WTC11 (cell line): ENCODE measurements at regions of chr15 and their contacts with region 1.

Region 1: DNA sequence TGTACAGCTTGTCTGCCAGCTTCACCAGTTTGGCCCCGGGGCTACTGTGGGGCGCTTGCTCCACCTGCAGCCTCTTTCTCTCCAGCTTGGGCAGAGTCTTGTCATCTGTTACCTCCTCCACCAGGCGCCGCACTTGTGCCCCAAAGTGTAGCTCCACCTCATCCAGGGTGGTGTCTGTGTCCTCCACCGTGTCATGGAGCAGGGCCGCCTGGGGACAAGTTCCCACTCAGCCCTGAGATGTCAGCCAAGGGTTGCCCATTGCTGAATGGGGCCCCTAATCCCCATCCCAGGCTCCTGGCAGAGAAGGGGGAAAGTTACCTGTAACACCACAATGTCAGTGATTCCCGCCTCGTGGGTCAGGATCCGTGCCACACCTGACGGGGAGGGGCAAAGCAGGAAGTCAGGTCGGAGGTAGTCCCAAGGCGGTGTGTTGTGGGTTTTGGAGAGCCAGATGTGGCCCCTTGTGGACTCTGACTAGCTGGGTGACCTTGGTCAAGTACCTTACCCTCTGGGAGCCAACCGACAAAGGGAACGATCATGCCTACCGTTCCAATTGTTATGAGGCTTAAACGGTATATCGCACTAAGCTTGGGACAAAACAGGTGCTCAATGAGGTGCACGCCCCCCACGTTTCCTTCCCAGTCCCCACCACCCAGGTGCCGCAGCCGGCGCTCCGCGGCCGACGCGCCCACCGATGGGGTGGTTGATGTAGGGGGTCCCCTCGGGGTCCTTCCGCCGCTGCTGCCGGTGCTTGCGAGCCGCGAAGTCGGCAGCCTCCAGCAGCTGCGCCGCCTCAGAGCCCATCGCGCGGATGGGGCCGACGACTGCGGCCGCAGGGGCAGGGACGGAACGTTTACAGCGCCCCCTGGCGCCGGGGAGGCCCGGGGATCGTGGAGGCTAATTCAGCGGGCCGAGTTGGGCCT is at the start of gene HDDC3:
- DNase-seq: peak; percentile 96
- ATAC-seq: peak; percentile 49
- H3K4me3 Mint-ChIP-seq: peak within 1 kb of the TSS; percentile 95
- H3K27ac Mint-ChIP-seq: peak within 1 kb of the TSS; percentile 95
- H3K4me1 Mint-ChIP-seq: peaks cover 23% of the 10 kb centered on the region
- H3K27me3 Mint-ChIP-seq: peaks cover 12% of the 10 kb centered on the region
- CTCF ChIP-seq: peak; percentile 83
- total RNA-seq, gene HDDC3: 16.4 to 23.6 TPM (median 21.7 TPM) in 3 replicates

Region 2: DNA sequence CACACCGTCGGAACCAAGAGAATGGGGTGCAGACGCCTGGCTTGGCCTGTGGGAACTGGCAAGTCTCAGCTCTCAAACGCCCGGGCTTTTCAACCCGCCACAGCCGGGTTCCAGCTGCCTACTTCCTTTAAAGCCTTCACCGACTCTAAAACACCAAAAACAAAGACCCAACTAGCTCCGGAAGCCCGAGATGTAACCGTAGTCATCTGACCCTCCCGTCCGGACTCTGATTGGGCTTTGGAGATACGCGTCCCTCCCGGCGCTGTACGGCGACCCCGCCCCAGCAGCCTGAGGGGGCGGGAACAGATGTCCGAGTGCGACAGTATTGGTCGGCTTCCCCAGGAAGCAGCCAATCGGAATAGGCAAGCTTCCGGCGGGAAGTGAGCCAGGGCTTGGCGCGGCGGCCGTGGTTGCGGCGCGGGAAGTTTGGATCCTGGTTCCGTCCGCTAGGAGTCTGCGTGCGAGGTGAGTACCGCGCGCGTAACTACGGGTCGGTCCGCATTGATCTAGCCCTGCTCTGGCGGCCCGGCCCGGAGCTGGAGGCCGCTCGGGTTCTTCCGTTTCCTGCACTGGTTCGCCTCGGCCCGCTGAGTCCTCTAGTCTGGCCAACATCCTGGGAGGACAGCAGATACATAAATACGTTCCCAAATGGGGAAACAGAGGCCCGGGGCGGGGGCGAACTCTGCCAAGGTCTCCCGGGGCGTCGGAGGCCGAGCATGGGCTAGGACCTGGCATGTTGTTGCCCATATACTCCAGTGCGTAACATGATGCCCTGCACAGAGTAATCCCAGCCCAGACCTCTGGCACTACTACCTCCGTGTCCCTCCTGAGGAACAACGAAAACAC is 214.8 kb before region 1 on chr15 and contains the start of gene BLM:
- CTCF ChIA-PET with region 1: interaction called, 18 read pairs
- POLR2A ChIA-PET with region 1: interaction called, 5 read pairs
- DNase-seq: peak; percentile 95
- ATAC-seq: peak; percentile 99
- H3K4me3 Mint-ChIP-seq: peak within 1 kb of the TSS; percentile 98
- H3K27ac Mint-ChIP-seq: peak within 1 kb of the TSS; percentile 98
- H3K4me1 Mint-ChIP-seq: peaks cover 16% of the 10 kb centered on the region
- H3K27me3 Mint-ChIP-seq: no peaks in the 10 kb centered on the region
- CTCF ChIP-seq: no peak
- total RNA-seq, gene BLM: 29.9 to 40.5 TPM (median 34.8 TPM) in 3 replicates

Region 3: DNA sequence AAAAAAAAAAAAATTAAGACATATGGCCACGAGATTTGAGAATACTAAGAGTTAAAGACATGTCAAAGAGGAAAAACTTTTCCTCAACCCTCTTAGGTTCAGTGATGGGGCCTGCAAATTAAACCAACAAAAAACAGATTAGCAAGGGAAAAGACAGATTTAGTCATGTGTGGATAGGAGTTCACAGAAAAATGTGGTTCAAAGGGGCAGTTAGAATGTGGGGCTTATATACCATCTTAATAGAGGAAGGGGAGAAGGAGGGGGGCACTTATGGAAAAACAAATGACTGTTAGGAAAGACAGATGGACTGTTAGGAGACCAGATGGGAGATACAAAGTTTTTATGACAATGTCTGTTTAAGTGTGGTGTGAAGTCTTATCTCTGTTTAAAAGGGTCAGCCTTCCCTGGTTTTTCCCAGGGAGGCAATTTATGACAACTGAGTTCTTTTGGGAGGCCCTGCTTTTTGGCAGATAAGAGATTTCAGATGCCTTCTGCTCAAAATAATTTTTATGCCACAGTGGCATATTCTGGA is 132.3 kb before region 1 on chr15:
- CTCF ChIA-PET with region 1: no interaction called
- POLR2A ChIA-PET with region 1: no interaction called
- DNase-seq: no peak
- ATAC-seq: no peak
- H3K4me3 Mint-ChIP-seq: no peak overlapping the region
- H3K27ac Mint-ChIP-seq: no peak overlapping the region
- H3K4me1 Mint-ChIP-seq: no peaks in the 10 kb centered on the region
- H3K27me3 Mint-ChIP-seq: no peaks in the 10 kb centered on the region
- CTCF ChIP-seq: no peak

Region 4: DNA sequence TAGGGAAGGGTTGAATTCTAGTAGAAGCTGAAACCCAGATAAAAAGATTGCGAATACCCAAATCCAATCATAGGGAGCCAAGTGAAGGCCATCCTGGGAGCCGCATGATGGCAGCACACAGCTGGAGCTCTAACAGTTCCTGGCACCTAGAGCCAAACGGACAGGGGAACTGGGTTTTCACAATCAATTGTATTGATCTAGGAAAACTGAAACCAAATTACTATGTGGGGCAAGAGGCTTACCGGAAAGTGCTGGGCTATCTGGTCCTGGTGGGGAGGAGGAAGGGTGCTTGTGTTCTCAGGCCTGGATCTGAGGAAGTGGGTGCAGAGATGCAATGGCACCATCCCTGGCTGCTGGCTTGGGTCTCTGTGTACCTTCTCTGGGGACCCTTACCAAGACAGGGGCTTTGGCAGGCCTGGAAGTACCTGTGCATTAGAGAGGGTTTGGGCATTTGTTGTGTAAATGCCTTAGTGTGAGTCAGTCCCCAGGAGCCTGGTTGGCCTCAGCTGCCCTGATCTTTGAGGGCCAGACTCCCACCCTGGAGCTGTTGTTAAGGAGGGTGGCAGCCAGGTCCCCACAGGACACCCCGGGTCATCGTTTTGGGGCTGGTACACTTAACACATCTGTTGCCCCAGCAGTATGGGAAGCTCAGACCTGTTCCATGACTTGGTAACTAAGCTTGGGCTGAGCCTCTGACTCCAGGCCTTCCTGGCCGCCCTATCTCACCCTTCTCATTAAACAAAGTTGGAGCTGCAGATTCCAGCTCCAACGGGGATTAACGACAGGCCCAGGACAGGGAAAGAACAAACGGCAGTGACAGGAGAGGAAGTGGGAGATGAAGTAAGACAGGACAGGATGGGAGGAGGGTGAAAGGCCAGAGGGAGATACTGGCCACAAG is 72.5 kb before region 1 on chr15:
- CTCF ChIA-PET with region 1: interaction called, 11 read pairs
- POLR2A ChIA-PET with region 1: no interaction called
- DNase-seq: no peak
- ATAC-seq: peak; percentile 83
- H3K4me3 Mint-ChIP-seq: no peak overlapping the region
- H3K27ac Mint-ChIP-seq: peak overlapping the region; percentile 93
- H3K4me1 Mint-ChIP-seq: peaks cover 14% of the 10 kb centered on the region
- H3K27me3 Mint-ChIP-seq: no peaks in the 10 kb centered on the region
- CTCF ChIP-seq: no peak

Region 5: GRCh38 chr15:90895336-90896117 is 36.5 kb before region 1 on chr15:
- CTCF ChIA-PET with region 1: interaction called, 194 read pairs
- POLR2A ChIA-PET with region 1: interaction called, 3 read pairs
- DNase-seq: no peak
- ATAC-seq: peak; percentile 69
- H3K4me3 Mint-ChIP-seq: no peak overlapping the region
- H3K27ac Mint-ChIP-seq: no peak overlapping the region
- H3K4me1 Mint-ChIP-seq: no peaks in the 10 kb centered on the region
- H3K27me3 Mint-ChIP-seq: 0 out of 2 replicates have a peak, but pooled peaks cover 3% of the 10 kb centered on the region
- CTCF ChIP-seq: no peak

Region 6: GRCh38 chr15:90946538-90946937 is 14.5 kb after region 1 on chr15:
- CTCF ChIA-PET with region 1: interaction called, 15 read pairs
- POLR2A ChIA-PET with region 1: interaction called, 3 read pairs
- DNase-seq: no peak
- ATAC-seq: no peak
- H3K4me3 Mint-ChIP-seq: no peak overlapping the region
- H3K27ac Mint-ChIP-seq: no peak overlapping the region
- H3K4me1 Mint-ChIP-seq: no peaks in the 10 kb centered on the region
- H3K27me3 Mint-ChIP-seq: no peaks in the 10 kb centered on the region
- CTCF ChIP-seq: no peak

Region 7: DNA sequence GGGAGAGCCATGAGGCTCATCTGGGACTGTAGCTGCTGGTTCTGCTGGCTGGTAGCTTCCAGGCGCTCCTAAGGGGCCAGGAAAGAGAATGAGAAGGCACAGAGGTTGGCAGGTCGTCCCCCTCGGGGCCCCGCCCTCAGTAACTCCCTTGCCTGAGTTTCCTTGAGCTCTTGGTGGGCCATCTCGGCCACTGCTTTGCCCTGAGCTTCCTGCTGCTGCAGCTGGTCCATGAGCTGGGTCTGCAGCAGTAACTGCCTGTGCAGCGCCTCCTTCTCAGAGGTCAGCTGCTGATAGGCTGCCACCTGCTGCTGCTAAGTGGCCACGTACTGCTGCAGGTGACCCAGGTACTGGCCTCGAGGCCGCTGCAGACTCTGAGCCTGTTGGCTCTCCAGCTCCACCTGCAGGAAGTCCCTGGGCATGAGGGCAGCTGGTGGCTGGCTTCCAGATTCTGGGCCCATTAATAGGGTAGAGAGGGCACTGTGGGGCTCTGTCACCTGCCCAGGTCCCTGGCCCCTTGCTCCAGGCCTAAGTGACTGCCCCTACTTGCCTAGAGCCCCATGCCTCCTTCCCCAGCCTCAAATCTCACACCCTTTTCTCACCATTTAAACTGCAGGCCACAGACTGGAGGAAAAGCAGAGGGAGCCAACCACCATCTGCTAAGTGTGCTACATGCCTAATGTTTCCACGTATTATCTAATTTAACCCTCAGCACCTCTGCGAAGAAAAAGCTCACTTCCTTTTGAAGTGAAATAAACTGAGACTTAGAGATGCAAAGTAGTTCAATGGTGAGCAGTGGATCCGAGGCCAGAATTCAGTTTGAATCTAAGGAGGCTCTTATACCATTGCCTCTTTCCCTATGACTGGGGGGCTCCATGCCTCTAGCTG is 101.2 kb after region 1 on chr15:
- CTCF ChIA-PET with region 1: interaction called, 57 read pairs
- POLR2A ChIA-PET with region 1: interaction called, 3 read pairs
- DNase-seq: peak; percentile 92
- ATAC-seq: peak; percentile 94
- H3K4me3 Mint-ChIP-seq: peak overlapping the region; percentile 36
- H3K27ac Mint-ChIP-seq: peak overlapping the region; percentile 53; the same call in 1 of the 2 replicates
- H3K4me1 Mint-ChIP-seq: peaks cover 6% of the 10 kb centered on the region
- H3K27me3 Mint-ChIP-seq: peaks cover 11% of the 10 kb centered on the region
- CTCF ChIP-seq: peak; percentile 65

Region 8: DNA sequence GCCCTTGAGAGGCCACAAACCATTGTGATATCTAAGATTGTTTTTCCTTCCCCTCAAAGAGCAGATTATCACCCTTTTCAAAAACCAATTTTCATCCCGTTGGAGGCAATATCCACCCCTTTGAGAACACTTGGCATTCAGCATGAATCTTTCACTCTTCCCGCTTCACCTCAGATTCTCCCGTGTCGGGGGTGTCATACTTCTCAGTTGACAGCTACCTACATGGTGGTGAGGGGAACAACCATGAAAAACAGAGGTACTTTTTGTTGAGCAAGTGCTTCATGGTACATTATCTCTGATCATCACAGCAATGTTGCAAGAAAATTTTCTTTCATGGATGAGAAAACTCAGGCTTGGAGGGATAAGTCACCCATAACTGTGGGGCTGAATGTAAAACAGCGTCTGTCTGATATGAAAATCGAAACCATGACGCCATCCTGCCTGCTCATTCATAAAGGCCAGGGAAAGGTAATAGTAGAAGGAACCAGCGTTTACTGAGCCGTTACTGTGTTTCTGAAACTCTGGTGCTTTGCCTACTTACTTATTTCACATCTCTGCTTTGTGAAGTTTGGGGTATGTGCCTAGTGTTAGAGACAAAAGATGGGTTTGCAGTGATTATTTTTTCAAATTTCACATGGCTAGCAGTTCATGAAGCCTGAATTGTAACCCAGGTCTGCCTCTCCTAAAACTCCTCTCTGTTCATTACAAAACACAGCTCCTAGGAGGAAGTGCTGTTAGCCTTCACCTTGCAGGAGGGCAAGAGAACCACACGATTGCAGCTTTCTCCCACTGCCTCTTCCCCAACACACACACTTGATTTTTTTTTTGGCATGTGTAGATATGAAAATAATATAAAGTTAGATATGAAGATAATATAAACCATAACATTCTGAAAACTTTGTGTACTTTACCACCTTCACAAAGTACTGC is 203.5 kb after region 1 on chr15:
- CTCF ChIA-PET with region 1: no interaction called
- POLR2A ChIA-PET with region 1: no interaction called
- DNase-seq: no peak
- ATAC-seq: no peak
- H3K4me3 Mint-ChIP-seq: no peak overlapping the region
- H3K27ac Mint-ChIP-seq: no peak overlapping the region
- H3K4me1 Mint-ChIP-seq: peaks cover 8% of the 10 kb centered on the region
- H3K27me3 Mint-ChIP-seq: no peaks in the 10 kb centered on the region
- CTCF ChIP-seq: no peak